Activated CD4-positive, alpha-beta memory T cell treated with anti-CD3 and anti-CD28 coated beads for 36 hours (primary cell): ENCODE measurements at regions of chr4 and their contacts with region 1.

Region 1: DNA sequence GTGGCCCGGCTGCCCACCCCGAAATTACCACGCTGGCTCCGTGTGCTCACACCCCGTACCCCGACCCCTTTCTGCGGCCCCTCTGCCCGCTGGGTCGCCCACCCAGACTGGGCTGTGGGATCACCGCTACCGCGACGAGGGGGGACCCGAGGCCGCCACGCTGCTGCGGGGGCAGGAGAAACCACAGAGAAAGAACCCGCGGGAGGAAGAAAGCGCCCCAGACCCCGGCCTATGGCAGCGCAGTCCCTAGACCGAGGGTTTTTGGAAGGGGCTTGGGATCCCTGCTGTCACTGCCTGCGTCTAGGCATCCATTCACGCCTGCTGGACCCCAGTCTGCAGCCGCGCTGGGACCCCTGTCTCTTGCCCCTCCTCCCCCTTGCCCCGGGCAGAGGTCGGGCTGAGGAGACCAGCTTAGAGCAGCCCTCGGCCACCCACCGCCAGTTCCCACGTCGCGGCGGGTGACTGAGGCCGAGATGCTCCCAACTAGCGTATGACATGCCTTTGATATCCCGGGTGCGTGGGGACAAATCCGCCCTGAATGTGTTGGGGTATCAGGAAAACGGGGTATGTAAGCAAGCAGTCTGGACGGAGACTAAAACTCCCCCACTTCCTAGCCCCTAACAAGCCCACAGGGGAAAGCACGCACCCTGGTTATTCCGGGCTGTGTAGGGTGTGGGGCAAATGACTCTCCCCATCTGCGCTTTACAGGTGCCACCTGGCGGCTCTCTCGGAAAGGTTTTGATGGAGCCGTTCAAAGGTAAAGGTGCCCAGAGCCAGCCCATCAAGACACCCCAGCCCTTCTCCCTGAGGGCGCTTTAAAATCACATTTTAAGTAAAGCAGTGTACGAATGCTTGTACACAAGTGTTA is 862 bp upstream of the INPP4B start:
- DNase-seq: peak; percentile 87
- H3K4me3 Mint-ChIP-seq: peak overlapping the region; percentile 87
- H3K27ac Mint-ChIP-seq: peak overlapping the region; percentile 43
- H3K4me1 Mint-ChIP-seq: peaks cover 19% of the 10 kb centered on the region
- H3K27me3 Mint-ChIP-seq: peaks cover 7% of the 10 kb centered on the region

Region 2: GRCh38 chr4:141158219-141158618 is 1688.7 kb before region 1 on chr4:
- CTCF ChIA-PET with region 1: no interaction called
- POLR2A ChIA-PET with region 1: no interaction called
- intact Hi-C with region 1: loop called (anchors 2 kb)
- DNase-seq: no peak
- H3K4me3 Mint-ChIP-seq: no peak overlapping the region
- H3K27ac Mint-ChIP-seq: no peak overlapping the region
- H3K4me1 Mint-ChIP-seq: no peaks in the 10 kb centered on the region
- H3K27me3 Mint-ChIP-seq: peaks cover 19% of the 10 kb centered on the region

Region 3: GRCh38 chr4:141636082-141636770 is 1210.7 kb before region 1 on chr4 and contains the start of gene IL15:
- CTCF ChIA-PET with region 1: no interaction called
- POLR2A ChIA-PET with region 1: no interaction called
- intact Hi-C with region 1: loop called (anchors 10 kb)
- DNase-seq: peak; percentile 86
- H3K4me3 Mint-ChIP-seq: peak within 1 kb of the TSS; percentile 88
- H3K27ac Mint-ChIP-seq: peak within 1 kb of the TSS; percentile 64
- H3K4me1 Mint-ChIP-seq: peaks cover 27% of the 10 kb centered on the region
- H3K27me3 Mint-ChIP-seq: peaks cover 2% of the 10 kb centered on the region
- total RNA-seq, gene IL15: 1.4 to 2.2 TPM

Region 4: DNA sequence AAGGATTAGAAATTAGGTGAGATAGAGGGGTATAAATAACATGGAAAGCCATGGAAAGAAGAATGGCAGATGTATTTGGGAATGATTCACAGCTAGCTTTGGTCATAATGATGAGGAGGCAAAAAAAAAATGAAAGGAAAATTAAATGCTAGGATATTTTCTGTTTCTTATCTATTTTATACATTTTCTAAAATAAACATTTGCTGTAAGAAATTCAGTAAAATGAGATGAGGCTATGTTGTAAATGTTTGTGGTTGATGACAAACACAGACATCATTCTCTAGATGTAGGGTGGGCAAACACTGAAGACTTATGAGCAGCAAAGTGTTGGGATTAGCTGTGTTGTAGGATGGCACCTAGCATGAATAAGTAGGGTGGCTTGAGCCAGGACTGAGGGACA is 803.5 kb before region 1 on chr4:
- CTCF ChIA-PET with region 1: no interaction called
- POLR2A ChIA-PET with region 1: no interaction called
- intact Hi-C with region 1: loop called (anchors 5 kb)
- DNase-seq: no peak
- H3K4me3 Mint-ChIP-seq: no peak overlapping the region
- H3K27ac Mint-ChIP-seq: no peak overlapping the region
- H3K4me1 Mint-ChIP-seq: peaks cover 51% of the 10 kb centered on the region
- H3K27me3 Mint-ChIP-seq: no peaks in the 10 kb centered on the region

Region 5: GRCh38 chr4:142719854-142720541 is 127.0 kb before region 1 on chr4:
- CTCF ChIA-PET with region 1: no interaction called
- POLR2A ChIA-PET with region 1: no interaction called
- intact Hi-C with region 1: loop called (anchors 1 kb)
- DNase-seq: no peak
- H3K4me3 Mint-ChIP-seq: no peak overlapping the region
- H3K27ac Mint-ChIP-seq: peak overlapping the region; percentile 69
- H3K4me1 Mint-ChIP-seq: peaks cover 28% of the 10 kb centered on the region
- H3K27me3 Mint-ChIP-seq: no peaks in the 10 kb centered on the region

Region 6: DNA sequence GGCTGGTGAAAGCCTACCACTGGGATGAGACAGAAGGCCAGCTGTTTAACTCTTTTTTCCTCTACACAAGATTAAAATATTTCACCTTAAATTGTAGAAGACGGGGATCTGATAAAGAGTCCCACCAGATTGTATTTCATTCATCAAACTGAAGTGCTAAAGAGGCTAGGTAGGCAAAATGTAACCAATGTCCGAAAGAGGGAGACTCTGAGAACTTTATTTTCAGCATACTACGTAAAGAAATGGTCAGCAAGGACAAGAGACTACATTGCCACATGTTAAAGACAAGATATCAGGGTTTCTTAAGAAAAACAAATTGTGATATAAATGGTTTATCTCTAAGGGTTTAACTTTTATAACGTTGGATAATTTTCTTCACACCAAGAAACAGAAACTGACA is 70.7 kb after region 1 on chr4:
- CTCF ChIA-PET with region 1: no interaction called
- POLR2A ChIA-PET with region 1: no interaction called
- intact Hi-C with region 1: no loop called
- DNase-seq: no peak
- H3K4me3 Mint-ChIP-seq: no peak overlapping the region
- H3K27ac Mint-ChIP-seq: no peak overlapping the region
- H3K4me1 Mint-ChIP-seq: no peaks in the 10 kb centered on the region
- H3K27me3 Mint-ChIP-seq: peaks cover 4% of the 10 kb centered on the region

Region 7: GRCh38 chr4:143184217-143185116 is 337.5 kb after region 1 on chr4 and contains the start of gene USP38:
- CTCF ChIA-PET with region 1: no interaction called
- POLR2A ChIA-PET with region 1: no interaction called
- intact Hi-C with region 1: loop called (anchors 5 kb)
- DNase-seq: peak; percentile 96
- H3K4me3 Mint-ChIP-seq: peak within 1 kb of the TSS; percentile 87
- H3K27ac Mint-ChIP-seq: peak within 1 kb of the TSS; percentile 94
- H3K4me1 Mint-ChIP-seq: peaks cover 28% of the 10 kb centered on the region
- H3K27me3 Mint-ChIP-seq: no peaks in the 10 kb centered on the region
- total RNA-seq, gene USP38: 21.7 to 22.0 TPM